Caco-2 (cell line): ENCODE measurements at regions of chr14 and their contacts with region 1.

Region 1: GRCh38 chr14:64303471-64303917 is 9.3 kb upstream of the ESR2 start:
- DNase-seq: peak in 1 of 2 experiments; percentile 56
- H3K4me3 ChIP-seq: no peak overlapping the region
- H3K4me3 Mint-ChIP-seq: no peak overlapping the region
- H3K27ac Mint-ChIP-seq: no peak overlapping the region
- H3K4me1 ChIP-seq: no peaks in the 10 kb centered on the region
- H3K4me1 Mint-ChIP-seq: no peaks in the 10 kb centered on the region
- H3K27me3 ChIP-seq: no peaks in the 10 kb centered on the region
- H3K27me3 Mint-ChIP-seq: peaks cover 3% of the 10 kb centered on the region
- CTCF ChIP-seq: peak; percentile 66 to 70

Region 2: DNA sequence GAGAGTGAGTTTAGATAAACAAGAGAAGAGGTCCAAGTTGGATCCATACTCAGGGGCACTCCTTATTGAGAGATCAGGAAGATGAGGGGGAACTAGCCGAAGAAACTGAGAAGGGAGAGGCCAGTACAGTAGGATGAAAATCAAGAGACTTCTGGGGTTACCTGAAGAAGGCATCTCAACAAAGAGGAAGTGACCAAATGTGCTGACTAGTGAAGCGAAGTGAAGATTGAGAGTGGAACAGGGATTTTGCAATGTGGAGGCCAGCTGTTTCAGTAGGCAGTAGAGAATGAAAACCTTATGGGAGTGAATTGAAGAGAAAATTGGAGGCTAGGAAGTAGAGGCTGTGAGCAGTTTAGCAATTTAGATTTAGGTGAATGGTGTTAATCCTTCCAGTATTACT is 297.7 kb before region 1 on chr14:
- CTCF ChIA-PET with region 1: interaction called, 5 read pairs
- POLR2A ChIA-PET with region 1: no interaction called
- intact Hi-C with region 1: loop called (anchors 1 kb)
- DNase-seq: no peak
- H3K4me3 ChIP-seq: no peak overlapping the region
- H3K4me3 Mint-ChIP-seq: no peak overlapping the region
- H3K27ac Mint-ChIP-seq: no peak overlapping the region
- H3K4me1 ChIP-seq: no peaks in the 10 kb centered on the region
- H3K4me1 Mint-ChIP-seq: no peaks in the 10 kb centered on the region
- H3K27me3 ChIP-seq: no peaks in the 10 kb centered on the region
- H3K27me3 Mint-ChIP-seq: no peaks in the 10 kb centered on the region
- CTCF ChIP-seq: no peak

Region 3: GRCh38 chr14:64147126-64147790 is 156.2 kb before region 1 on chr14:
- CTCF ChIA-PET with region 1: no interaction called
- POLR2A ChIA-PET with region 1: no interaction called
- intact Hi-C with region 1: no loop called
- DNase-seq: no peak
- H3K4me3 ChIP-seq: no peak overlapping the region
- H3K4me3 Mint-ChIP-seq: no peak overlapping the region
- H3K27ac Mint-ChIP-seq: no peak overlapping the region
- H3K4me1 ChIP-seq: no peaks in the 10 kb centered on the region
- H3K4me1 Mint-ChIP-seq: no peaks in the 10 kb centered on the region
- H3K27me3 ChIP-seq: no peaks in the 10 kb centered on the region
- H3K27me3 Mint-ChIP-seq: no peaks in the 10 kb centered on the region
- CTCF ChIP-seq: no peak

Region 4: DNA sequence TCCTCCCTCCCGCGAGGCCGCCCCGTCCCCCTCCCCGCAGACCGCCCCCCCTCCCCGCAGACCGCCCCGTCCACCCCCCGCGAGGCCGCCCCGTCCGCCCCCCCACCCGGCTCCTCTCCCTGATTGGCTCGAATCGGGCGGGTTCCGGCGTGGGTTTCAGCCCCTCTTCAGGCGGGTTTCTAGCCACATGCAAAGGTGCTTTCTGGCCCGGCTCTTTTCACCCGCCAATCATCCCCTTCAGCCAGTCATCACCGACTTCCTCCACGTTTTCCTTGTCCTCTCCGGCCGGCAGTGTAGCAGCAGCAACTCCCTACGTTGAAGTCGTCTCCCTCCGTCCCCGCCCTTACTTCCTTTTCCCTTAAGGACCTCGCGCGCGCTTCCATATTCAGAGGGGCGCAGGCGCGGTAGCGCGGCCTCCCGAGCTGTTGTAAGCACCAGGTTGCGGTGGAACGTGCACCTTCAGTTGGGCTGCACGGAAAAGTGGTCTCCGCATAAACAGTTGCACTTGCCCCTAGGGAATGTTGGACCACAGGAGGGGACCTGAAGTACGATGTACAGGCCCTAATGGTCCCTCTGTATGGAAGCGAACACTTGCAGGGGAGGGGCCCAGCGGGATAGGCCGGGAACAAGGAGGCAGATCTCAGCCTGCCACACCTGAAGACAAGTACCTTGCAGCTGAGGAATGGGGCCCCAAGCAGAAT is 35.3 kb after region 1 on chr14:
- CTCF ChIA-PET with region 1: no interaction called
- POLR2A ChIA-PET with region 1: no interaction called
- intact Hi-C with region 1: no loop called
- DNase-seq: peak; percentile 97 to 99
- H3K4me3 ChIP-seq: peak overlapping the region; percentile 81
- H3K4me3 Mint-ChIP-seq: peak overlapping the region; percentile 94
- H3K27ac Mint-ChIP-seq: peak overlapping the region; percentile 96
- H3K4me1 ChIP-seq: peaks cover 8% of the 10 kb centered on the region
- H3K4me1 Mint-ChIP-seq: peaks cover 9% of the 10 kb centered on the region
- H3K27me3 ChIP-seq: no peaks in the 10 kb centered on the region
- H3K27me3 Mint-ChIP-seq: no peaks in the 10 kb centered on the region
- CTCF ChIP-seq: no peak